ENCODE measurements at regions of chr15 and their contacts with region 1.

Region 1: DNA sequence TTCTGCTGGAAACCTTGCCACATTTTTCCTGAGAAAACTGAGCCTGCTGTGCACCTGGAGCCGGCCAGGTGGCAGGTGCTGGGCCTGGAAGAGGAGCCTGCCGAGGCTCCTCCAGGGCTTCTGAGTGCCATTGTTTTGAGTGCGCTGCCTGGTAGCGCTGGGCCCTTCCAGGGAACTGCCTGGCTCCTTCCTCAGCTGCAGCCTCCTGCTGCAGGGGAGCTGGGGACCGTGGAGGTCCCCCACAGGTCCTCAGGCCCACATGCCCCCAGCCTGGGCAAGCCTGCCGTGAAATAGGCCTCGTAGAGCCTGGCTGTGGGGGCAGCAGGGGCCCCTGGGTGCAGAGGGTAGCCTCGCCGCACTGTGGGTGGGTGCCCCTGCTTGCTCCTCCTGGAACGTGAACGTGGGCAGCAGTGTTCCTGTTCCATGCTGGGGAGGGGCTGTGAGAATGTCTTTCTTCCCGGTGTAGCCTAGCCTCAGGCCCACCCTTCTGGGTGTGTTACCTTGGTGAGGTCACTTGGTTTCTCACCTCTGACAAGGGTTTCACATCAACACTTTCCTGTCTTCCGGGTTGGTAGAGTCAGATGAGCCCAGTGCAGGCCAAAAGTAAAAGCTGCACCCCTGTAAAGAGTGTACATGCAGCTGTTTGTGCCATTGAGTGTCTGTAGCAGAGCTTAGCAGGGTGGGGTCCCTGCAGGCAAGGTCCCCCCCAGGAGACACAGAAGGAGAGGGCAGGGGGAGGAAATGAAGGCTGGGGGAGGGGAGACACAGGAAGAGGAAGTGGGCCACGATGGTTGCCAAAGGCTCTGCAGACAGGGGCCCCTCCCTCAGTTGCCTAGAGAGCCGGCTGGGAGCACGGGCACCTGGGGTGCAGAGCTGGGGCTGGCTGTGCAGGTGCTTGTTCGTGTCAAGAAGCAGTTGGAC is 34.5 kb downstream of the KLF13 start:
- DNase-seq: peak; percentile 97
- H3K4me3 ChIP-seq: peak overlapping the region; percentile 61
- H3K27ac ChIP-seq: peak overlapping the region; percentile 98
- H3K4me1 ChIP-seq: peaks cover 98% of the 10 kb centered on the region
- CTCF ChIP-seq: no peak

Region 2: DNA sequence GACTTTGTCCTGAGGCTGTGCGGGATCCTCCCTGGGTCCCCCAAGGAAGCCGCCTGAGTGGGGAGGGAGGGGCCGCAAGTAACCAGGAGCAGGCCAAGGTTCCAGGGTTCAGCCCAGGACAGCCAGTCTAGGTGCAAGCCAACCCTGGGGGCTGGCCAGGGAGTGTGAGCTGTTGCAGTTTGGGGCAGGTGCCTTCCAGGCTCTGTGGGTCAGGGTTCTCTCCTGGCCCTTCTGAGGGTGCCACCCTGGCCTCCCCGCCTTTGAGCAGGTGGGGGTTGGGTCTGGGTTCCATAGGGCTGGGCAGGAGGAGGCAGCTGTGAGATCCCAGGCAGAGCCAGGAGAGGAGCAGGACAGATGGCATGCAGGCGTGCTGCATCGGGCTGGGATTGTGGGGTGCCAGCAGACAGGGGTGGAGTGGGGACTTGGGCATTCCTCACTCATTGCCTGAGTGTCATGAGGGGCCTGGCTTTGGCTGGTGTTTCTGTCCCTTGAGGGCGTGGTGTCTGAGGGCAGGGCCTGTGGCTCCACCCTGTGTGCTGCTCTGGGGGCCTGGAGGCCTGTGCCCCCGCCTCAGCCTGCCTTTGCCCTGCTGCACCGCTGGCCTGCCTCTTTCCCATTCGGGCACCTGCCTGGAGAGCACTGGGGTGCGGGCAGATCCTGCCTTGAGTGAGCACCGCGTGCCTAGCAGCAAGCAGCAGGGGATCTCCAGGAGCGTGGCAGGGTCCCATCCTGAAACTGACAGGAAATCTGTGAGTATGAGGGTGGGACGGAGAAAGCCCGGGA is 16.1 kb before region 1 on chr15:
- CTCF ChIA-PET with region 1: interaction called, 7 read pairs
- POLR2A ChIA-PET with region 1: interaction called, 10 read pairs
- intact Hi-C with region 1: no loop called
- DNase-seq: peak; percentile 39
- H3K4me3 ChIP-seq: peak overlapping the region; percentile 57
- H3K27ac ChIP-seq: peak overlapping the region; percentile 84
- H3K4me1 ChIP-seq: peaks cover 98% of the 10 kb centered on the region
- CTCF ChIP-seq: no peak

Measured in OCI-LY7 (cell line).